Activated CD4-positive, alpha-beta T cell treated with anti-CD3 and anti-CD28 coated beads for 36 hours (primary cell): ENCODE measurements at regions of chr19 and their contacts with region 1.

Region 1: GRCh38 chr19:47243776-47244547 is 12.4 kb upstream of the CCDC9 start:
- DNase-seq: peak; percentile 96
- ATAC-seq: peak; percentile 74
- H3K4me3 Mint-ChIP-seq: no peak overlapping the region
- H3K27ac Mint-ChIP-seq: peak overlapping the region; percentile 97
- H3K4me1 Mint-ChIP-seq: peaks cover 35% of the 10 kb centered on the region
- H3K27me3 Mint-ChIP-seq: peaks cover 2% of the 10 kb centered on the region

Region 2: DNA sequence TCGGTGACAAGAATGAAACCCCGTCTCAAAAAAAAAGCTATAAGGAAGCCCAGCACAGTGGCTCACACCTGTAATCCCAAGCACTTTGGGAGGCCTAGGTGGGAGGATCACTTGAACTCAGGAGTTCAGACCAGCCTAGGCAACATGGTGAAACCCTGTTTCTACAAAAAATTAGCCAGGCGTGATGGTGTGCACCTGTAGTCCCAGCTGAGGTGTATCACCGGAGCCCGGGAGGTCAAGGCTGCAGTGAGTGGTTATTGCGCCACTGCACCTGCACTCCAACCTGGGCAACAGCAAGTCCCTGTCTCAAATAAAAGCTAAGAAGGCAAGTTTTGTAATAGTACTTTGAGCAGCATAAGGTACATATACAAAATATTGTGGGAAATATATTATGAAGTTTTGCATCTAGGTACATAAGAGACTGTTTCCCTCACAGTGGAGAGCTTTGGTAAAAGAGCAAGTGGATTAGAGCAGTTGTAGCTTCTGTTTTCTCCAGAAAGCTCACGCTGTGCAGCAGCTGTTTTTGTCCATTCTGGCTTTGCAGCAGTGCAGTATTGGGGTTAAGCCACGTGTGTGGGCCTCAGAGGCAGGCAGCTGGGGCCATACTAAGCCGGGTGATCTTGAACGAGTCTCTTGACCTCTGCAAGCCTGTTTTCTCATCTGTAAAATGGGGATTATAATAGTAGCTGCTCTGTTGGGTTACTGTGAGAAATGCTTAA is 347.7 kb before region 1 on chr19:
- CTCF ChIA-PET with region 1: no interaction called
- POLR2A ChIA-PET with region 1: no interaction called
- intact Hi-C with region 1: no loop called
- DNase-seq: no peak
- ATAC-seq: no peak
- H3K4me3 Mint-ChIP-seq: no peak overlapping the region
- H3K27ac Mint-ChIP-seq: no peak overlapping the region
- H3K4me1 Mint-ChIP-seq: peaks cover 19% of the 10 kb centered on the region
- H3K27me3 Mint-ChIP-seq: no peaks in the 10 kb centered on the region

Region 3: GRCh38 chr19:47013041-47013517 is 230.9 kb before region 1 on chr19:
- CTCF ChIA-PET with region 1: interaction called, 13 read pairs
- POLR2A ChIA-PET with region 1: no interaction called
- intact Hi-C with region 1: loop called in 1 of 2 experiments (anchors 1 kb)
- DNase-seq: peak; percentile 79
- ATAC-seq: peak; percentile 87
- H3K4me3 Mint-ChIP-seq: no peak overlapping the region
- H3K27ac Mint-ChIP-seq: no peak overlapping the region
- H3K4me1 Mint-ChIP-seq: peaks cover 7% of the 10 kb centered on the region
- H3K27me3 Mint-ChIP-seq: no peaks in the 10 kb centered on the region

Region 4: GRCh38 chr19:47124937-47125668 is 118.9 kb before region 1 on chr19:
- CTCF ChIA-PET with region 1: interaction called, 11 read pairs
- POLR2A ChIA-PET with region 1: interaction called, 3 read pairs
- intact Hi-C with region 1: loop called in 1 of 2 experiments (anchors 1 kb)
- DNase-seq: peak; percentile 14
- ATAC-seq: peak; percentile 64
- H3K4me3 Mint-ChIP-seq: no peak overlapping the region
- H3K27ac Mint-ChIP-seq: peak overlapping the region; percentile 20
- H3K4me1 Mint-ChIP-seq: peaks cover 3% of the 10 kb centered on the region
- H3K27me3 Mint-ChIP-seq: no peaks in the 10 kb centered on the region

Region 5: DNA sequence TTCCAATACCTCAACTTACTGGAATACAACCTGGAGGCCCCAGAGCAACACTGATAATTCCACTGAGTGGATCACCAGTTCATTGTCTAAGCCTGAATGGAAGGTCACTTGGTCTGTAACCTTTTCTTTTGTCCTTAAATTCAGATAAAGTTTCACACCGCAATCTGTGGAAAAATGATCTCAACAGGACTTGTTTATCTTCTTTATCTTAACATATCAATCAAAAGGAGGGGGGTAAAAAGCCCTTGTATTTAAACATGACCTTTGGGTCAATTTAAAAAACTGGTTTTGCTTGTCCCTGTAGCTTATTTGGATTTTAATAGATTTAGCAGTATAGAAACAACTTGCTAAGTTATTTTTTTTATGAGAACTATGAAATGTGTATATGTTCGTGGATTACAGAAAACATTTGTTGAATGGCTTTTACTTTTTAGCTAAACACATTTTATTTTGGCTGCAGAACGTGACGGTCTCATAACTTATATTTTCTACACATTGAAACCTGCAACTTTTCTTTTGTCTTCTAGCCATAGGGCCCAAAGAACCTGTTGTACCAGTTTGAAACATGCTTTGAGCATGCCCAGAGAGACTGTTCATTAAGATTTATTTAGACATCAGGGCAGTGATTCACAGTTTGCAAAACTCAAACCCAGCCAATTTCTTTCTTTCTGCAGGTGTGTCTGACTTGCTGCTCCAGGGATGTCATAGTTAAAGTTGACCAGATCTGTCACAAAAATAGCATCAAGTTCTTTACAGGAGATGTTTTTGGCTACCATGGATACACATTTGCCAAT is 91.5 kb before region 1 on chr19:
- CTCF ChIA-PET with region 1: interaction called, 48 read pairs
- POLR2A ChIA-PET with region 1: interaction called, 4 read pairs
- intact Hi-C with region 1: loop called (anchors 1 kb)
- DNase-seq: no peak
- ATAC-seq: no peak
- H3K4me3 Mint-ChIP-seq: no peak overlapping the region
- H3K27ac Mint-ChIP-seq: no peak overlapping the region
- H3K4me1 Mint-ChIP-seq: peaks cover 55% of the 10 kb centered on the region
- H3K27me3 Mint-ChIP-seq: no peaks in the 10 kb centered on the region

Region 6: GRCh38 chr19:47203254-47203653 is 40.7 kb before region 1 on chr19:
- CTCF ChIA-PET with region 1: interaction called, 205 read pairs
- POLR2A ChIA-PET with region 1: no interaction called
- intact Hi-C with region 1: no loop called
- DNase-seq: no peak
- ATAC-seq: no peak
- H3K4me3 Mint-ChIP-seq: no peak overlapping the region
- H3K27ac Mint-ChIP-seq: peak overlapping the region; percentile 44
- H3K4me1 Mint-ChIP-seq: peaks cover 10% of the 10 kb centered on the region
- H3K27me3 Mint-ChIP-seq: no peaks in the 10 kb centered on the region

Region 7: GRCh38 chr19:47231215-47231984 is 12.6 kb before region 1 on chr19:
- CTCF ChIA-PET with region 1: interaction called, 43 read pairs
- POLR2A ChIA-PET with region 1: interaction called, 24 read pairs
- intact Hi-C with region 1: loop called (anchors 1 kb)
- DNase-seq: peak; percentile 95
- ATAC-seq: peak; percentile 63
- H3K4me3 Mint-ChIP-seq: peak overlapping the region; percentile 61
- H3K27ac Mint-ChIP-seq: peak overlapping the region; percentile 71
- H3K4me1 Mint-ChIP-seq: peaks cover 30% of the 10 kb centered on the region
- H3K27me3 Mint-ChIP-seq: no peaks in the 10 kb centered on the region